ENCODE measurements at regions of chr2 and their contacts with region 1.

Region 1: GRCh38 chr2:85750587-85751575 is 2.9 kb upstream of the ATOH8 start:
- DNase-seq: peak; percentile 75
- H3K4me3 ChIP-seq: no peak overlapping the region
- H3K27ac ChIP-seq: peak overlapping the region; percentile 93
- H3K4me1 ChIP-seq: peaks cover 98% of the 10 kb centered on the region
- H3K27me3 ChIP-seq: no peaks in the 10 kb centered on the region
- CTCF ChIP-seq: peak; percentile 87

Region 2: GRCh38 chr2:84603911-84604310 is 1147.0 kb before region 1 on chr2:
- intact Hi-C with region 1: no loop called
- DNase-seq: no peak
- H3K4me3 ChIP-seq: no peak overlapping the region
- H3K27ac ChIP-seq: no peak overlapping the region
- H3K4me1 ChIP-seq: no peaks in the 10 kb centered on the region
- H3K27me3 ChIP-seq: no peaks in the 10 kb centered on the region
- CTCF ChIP-seq: no peak

Region 3: DNA sequence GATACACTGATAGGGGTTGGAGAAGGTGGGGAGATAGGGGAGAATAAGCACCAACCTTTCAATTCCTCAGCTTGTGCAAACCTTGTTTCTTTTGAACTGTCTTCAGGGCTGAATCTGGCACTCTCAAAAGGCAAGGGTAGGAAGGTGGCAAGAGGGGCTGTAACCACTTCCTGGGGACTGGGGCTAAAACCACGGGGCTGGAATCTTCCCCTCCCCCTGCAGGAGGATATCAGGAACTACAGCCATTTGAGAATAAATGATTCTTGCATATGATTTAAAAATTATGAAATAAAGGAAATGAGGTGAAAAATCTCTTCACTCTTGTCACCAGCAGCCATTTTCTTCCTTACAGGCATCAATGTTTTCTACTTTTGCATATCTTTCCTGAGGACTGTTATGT is 53.7 kb after region 1 on chr2:
- intact Hi-C with region 1: loop called (anchors 10 kb)
- DNase-seq: no peak
- H3K4me3 ChIP-seq: no peak overlapping the region
- H3K27ac ChIP-seq: no peak overlapping the region
- H3K4me1 ChIP-seq: peaks cover 5% of the 10 kb centered on the region
- H3K27me3 ChIP-seq: no peaks in the 10 kb centered on the region
- CTCF ChIP-seq: peak; percentile 76